ENCODE measurements at regions of chr21 and their contacts with region 1.

Region 1: GRCh38 chr21:17611414-17612022 is 1.2 kb downstream of the BTG3 start:
- DNase-seq: peak; percentile 57 to 95
- H3K4me3 ChIP-seq: peak overlapping the region; percentile 82 to 93
- H3K27ac ChIP-seq: peak overlapping the region; percentile 89 to 96
- H3K4me1 ChIP-seq: peaks cover 0 to 7% of the 10 kb centered on the region in 2 donors
- H3K27me3 ChIP-seq: no peaks in the 10 kb centered on the region
- CTCF ChIP-seq: no peak

Region 2: GRCh38 chr21:17454315-17455027 is 157.0 kb before region 1 on chr21:
- intact Hi-C with region 1: loop called (anchors 5 kb)
- DNase-seq: no peak
- H3K4me3 ChIP-seq: no peak overlapping the region
- H3K27ac ChIP-seq: no peak overlapping the region
- H3K4me1 ChIP-seq: no peaks in the 10 kb centered on the region
- H3K27me3 ChIP-seq: no peaks in the 10 kb centered on the region
- CTCF ChIP-seq: no peak

Region 3: DNA sequence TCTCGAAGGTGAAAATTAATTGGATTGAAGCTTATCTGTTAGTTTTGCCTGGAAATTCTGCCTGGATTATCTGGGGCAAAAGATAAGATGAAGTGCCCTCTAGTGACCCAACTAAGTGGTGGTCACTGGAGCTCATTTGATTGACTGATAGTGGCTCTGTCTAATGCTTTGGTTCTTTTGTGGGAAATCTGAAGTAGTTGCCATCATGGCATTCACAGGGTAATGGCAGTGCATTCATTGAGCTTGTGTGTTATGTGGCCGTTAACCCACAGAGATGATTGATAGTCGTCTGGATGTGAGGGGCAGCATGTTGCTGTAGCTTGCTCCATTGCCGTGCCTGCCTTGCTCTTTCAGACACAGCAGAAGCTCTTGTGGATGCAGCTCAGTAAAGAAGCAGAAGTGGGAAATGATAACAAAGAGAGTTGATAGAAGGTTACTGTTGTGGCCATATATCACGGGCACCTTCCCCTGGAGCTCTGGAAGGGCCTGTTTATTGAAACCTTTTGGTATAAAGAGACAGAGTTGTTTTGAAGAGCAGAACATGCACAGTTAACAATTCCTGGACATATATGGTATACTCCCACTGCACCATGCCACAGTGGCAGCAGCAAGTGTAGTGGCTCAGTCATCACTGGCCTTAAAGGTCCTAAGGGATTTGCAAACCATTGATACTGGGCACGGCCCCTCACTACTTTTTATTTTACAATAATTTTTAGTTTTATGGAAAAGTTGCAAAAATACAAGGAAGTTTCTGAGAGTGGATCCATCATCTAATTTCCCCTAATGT is 56.6 kb before region 1 on chr21:
- intact Hi-C with region 1: no loop called
- DNase-seq: no peak
- H3K4me3 ChIP-seq: no peak overlapping the region
- H3K27ac ChIP-seq: no peak overlapping the region
- H3K4me1 ChIP-seq: no peaks in the 10 kb centered on the region
- H3K27me3 ChIP-seq: no peaks in the 10 kb centered on the region
- CTCF ChIP-seq: no peak

Region 4: GRCh38 chr21:17819114-17819876 is 207.8 kb after region 1 on chr21 and contains the start of gene C21orf91:
- intact Hi-C with region 1: loop called (anchors 1 kb)
- DNase-seq: peak; percentile 56 to 93
- H3K4me3 ChIP-seq: peak within 1 kb of the TSS; percentile 80 to 81
- H3K27ac ChIP-seq: peak within 1 kb of the TSS; percentile 80 to 85
- H3K4me1 ChIP-seq: peaks cover 0 to 4% of the 10 kb centered on the region in 2 donors
- H3K27me3 ChIP-seq: no peaks in the 10 kb centered on the region
- CTCF ChIP-seq: no peak
- total RNA-seq, gene C21orf91: 11.3 TPM

Region 5: GRCh38 chr21:17911628-17912027 is 300.1 kb after region 1 on chr21:
- intact Hi-C with region 1: no loop called
- DNase-seq: no peak
- H3K4me3 ChIP-seq: no peak overlapping the region
- H3K27ac ChIP-seq: no peak overlapping the region
- H3K4me1 ChIP-seq: no peaks in the 10 kb centered on the region
- H3K27me3 ChIP-seq: no peaks in the 10 kb centered on the region
- CTCF ChIP-seq: no peak